ENCODE measurements at regions of chr17 and their contacts with region 1.

Region 1: GRCh38 chr17:49227436-49228261 is 2.9 kb downstream of the PHOSPHO1 start:
- DNase-seq: peak; percentile 81
- CTCF ChIP-seq: peak; percentile 74

Region 2: DNA sequence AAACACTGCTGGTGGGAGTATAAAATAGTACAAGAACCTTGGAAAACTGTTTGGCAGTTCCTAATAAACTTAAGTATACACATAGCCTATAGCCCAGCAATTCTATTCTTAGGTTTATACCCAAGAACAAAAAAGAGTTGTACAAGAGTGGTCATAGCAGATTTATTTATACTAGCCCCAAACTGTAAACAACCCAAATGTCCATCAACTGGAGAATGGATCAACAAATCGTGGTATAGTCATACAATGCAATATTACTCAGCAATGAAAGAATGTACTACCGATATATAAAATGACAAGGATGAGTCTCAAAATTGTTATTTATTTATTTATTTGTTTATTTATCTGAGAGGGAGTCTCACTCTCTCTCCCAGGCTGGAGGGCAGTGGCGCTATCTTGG is 40.3 kb before region 1 on chr17:
- in situ Hi-C with region 1: loop called (anchors 5 kb)
- DNase-seq: no peak
- CTCF ChIP-seq: no peak

Measured in GM13976 (cell line).